MCF 10A (cell line): ENCODE measurements at regions of chr6 and their contacts with region 1.

Region 1: GRCh38 chr6:136772685-136773472 is 19.4 kb downstream of the MAP3K5 start:
- DNase-seq: no peak
- H3K4me3 Mint-ChIP-seq: no peak overlapping the region
- H3K27ac Mint-ChIP-seq: no peak overlapping the region
- H3K4me1 Mint-ChIP-seq: peaks cover 23% of the 10 kb centered on the region
- H3K27me3 Mint-ChIP-seq: no peaks in the 10 kb centered on the region
- CTCF ChIP-seq: no peak

Region 2: GRCh38 chr6:136761227-136761922 is 11.5 kb before region 1 on chr6:
- CTCF ChIA-PET with region 1: interaction called, 3 read pairs
- POLR2A ChIA-PET with region 1: interaction called, 10 read pairs
- intact Hi-C with region 1: no loop called
- DNase-seq: no peak
- H3K4me3 Mint-ChIP-seq: peak overlapping the region; percentile 17
- H3K27ac Mint-ChIP-seq: peak overlapping the region; percentile 32
- H3K4me1 Mint-ChIP-seq: peaks cover 19% of the 10 kb centered on the region
- H3K27me3 Mint-ChIP-seq: no peaks in the 10 kb centered on the region
- CTCF ChIP-seq: no peak